ENCODE measurements at regions of chrX and their contacts with region 1.

Region 1: DNA sequence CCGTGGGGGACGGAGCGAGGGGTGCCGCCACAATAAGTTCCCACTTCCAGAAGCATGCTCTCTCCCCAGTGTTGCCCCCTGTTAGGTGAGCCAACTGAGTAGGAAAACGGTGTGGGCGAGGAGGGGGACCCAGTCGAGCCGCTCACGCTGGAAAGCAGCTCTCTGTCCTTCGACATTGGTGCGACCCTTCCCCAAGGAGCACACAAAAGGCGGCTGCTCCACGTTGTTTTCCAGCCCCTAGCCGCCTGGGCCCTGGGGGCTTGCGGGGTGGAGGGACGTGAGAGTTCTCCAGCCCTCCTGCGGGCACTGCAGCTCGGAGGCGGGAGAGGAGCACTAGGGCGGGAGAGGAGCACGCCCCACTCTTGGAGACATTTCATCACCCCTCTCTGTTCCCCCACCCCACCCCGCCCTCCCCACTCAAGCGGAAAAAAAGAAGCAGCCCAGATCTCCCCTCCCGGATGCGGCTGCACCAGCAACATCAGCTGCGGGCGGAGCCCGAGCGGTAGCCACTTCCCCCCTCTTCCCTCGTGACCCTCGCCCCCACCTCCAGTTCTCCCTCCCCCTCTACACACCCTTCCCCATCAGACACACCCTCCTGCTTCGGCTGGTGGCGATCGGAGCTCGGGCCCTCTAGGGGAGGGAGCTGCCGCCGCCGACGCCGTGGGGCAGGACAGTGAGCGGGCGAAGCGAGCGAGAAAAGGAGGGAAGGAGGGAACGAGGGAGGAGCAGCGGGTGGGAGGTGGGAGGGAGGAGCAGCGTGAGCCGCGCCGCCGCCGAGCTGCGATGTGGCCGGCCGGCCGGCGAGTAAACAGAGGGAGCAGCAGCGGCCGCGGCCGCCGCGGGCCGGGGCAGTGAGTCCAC is at the start of gene DOCK11:
- DNase-seq: peak; percentile 86
- H3K4me3 Mint-ChIP-seq: peak within 1 kb of the TSS; percentile 100
- H3K27ac Mint-ChIP-seq: peak within 1 kb of the TSS; percentile 100
- H3K4me1 Mint-ChIP-seq: peaks cover 30% of the 10 kb centered on the region
- H3K27me3 Mint-ChIP-seq: no peaks in the 10 kb centered on the region
- total RNA-seq, gene DOCK11: 79.0 to 82.9 TPM

Region 2: GRCh38 chrX:118459494-118459893 is 35.8 kb before region 1 on chrX:
- CTCF ChIA-PET with region 1: interaction called, 6 read pairs
- POLR2A ChIA-PET with region 1: interaction called, 12 read pairs
- DNase-seq: peak; percentile 18
- H3K4me3 Mint-ChIP-seq: no peak overlapping the region
- H3K27ac Mint-ChIP-seq: no peak overlapping the region
- H3K4me1 Mint-ChIP-seq: no peaks in the 10 kb centered on the region
- H3K27me3 Mint-ChIP-seq: no peaks in the 10 kb centered on the region

Region 3: DNA sequence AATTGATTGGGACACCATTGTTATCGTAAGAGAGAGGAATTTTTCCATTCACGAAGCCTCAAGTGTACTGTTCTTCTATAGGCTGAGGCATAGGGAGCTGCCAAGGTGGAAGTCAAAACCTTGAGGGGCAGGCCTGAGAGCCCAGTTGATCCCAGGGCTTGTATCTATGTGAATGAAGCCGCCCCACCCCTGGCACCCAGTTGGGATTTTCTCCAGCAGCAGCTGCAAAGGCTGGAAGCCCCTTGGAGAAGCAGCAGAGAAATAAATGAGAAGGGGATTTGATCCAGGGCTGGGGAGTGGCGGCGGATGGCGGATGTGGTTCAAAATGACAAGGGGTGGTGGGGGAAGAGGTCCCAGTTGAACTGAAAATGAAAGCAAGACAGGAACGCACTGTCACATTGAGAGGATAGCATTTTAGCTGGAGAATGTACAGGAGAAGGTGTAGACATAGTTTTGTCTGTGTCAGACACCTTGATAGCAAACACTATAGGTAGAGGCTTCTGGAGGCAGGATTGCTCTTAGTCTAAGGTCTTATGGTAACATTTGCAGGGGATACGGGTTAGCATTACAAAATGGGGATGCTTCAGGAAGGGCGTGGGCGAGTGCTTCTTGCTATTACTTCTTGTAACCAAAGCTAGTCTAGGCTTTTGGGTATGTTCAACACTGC is 32.9 kb after region 1 on chrX:
- CTCF ChIA-PET with region 1: interaction called, 13 read pairs
- POLR2A ChIA-PET with region 1: interaction called, 389 read pairs
- DNase-seq: peak; percentile 69
- H3K4me3 Mint-ChIP-seq: peak overlapping the region; percentile 89
- H3K27ac Mint-ChIP-seq: peak overlapping the region; percentile 98
- H3K4me1 Mint-ChIP-seq: peaks cover 82% of the 10 kb centered on the region
- H3K27me3 Mint-ChIP-seq: no peaks in the 10 kb centered on the region

Region 4: DNA sequence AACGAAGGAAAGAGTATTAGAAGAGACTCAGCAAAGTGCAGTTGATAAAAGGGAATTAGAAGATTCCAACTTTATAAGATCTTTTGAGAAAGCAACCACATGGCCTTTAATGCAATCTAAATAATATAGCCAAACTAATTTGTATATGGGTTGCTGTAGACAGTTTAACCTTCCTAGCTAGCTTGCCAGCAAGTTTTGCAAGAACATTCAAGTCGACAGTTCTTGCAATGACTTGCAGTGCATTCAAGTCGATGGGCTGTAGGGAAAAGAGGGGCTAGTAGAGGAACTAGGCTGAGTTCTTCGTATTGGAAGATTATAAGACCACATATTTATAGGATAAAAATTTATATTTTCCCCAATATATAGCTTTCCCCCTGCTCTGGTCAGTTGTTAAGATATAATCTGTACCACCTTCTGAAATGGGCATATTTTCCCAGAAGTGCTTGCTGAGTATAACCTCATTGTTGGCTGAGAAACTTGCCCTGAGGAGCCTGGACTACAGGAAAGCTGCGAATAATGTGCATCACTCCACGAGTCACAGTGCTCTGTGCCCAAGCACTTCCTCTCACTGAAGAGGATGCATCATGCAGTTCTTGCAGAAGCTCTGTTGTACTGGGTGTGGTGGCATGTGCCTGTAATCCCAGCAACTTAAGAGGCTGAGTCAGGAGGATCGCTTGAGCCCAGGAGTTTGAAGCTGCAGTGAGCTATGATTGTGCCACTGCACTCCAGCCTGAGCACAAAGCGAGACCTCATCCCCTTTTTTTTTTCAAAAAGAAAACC is 57.0 kb after region 1 on chrX:
- CTCF ChIA-PET with region 1: no interaction called
- POLR2A ChIA-PET with region 1: interaction called, 29 read pairs
- DNase-seq: no peak
- H3K4me3 Mint-ChIP-seq: no peak overlapping the region
- H3K27ac Mint-ChIP-seq: peak overlapping the region; percentile 31
- H3K4me1 Mint-ChIP-seq: peaks cover 41% of the 10 kb centered on the region
- H3K27me3 Mint-ChIP-seq: no peaks in the 10 kb centered on the region

Measured in activated CD4-positive, alpha-beta memory T cell treated with anti-CD3 and anti-CD28 coated beads, Interleukin-2, amount 10 ng/mL, durations not matched to agents 7 days and 5 days (primary cell).